Ascending aorta (tissue), 2 donors: ENCODE measurements at regions of chr5 and their contacts with region 1.

Region 1: DNA sequence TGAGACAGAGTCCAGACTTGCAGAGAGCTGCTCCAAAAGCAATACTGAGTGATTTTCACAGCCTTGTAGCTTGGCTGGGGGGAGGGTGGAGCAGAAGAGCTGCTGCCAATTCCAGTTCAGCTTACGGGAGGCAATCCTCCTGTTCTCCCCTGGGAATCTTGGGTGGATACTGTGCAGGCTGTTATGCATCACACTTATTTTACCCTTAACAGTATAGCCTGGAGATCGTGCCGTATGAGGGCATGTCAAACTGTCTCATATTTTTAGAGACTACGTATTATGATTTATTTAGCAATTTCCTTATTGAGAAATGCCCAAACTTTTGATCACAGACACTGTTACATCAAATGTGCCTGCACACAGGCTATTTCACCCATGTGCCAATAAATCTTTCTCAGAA is 85.2 kb downstream of the BASP1 start:
- DNase-seq: peak in 1 of 2 donors; percentile 79
- H3K4me3 ChIP-seq: no peak overlapping the region
- H3K27ac ChIP-seq: peak overlapping the region; percentile 38 to 44
- H3K4me1 ChIP-seq: peaks cover 5 to 37% of the 10 kb centered on the region in 2 donors
- H3K27me3 ChIP-seq: no peaks in the 10 kb centered on the region
- CTCF ChIP-seq: no peak

Region 2: DNA sequence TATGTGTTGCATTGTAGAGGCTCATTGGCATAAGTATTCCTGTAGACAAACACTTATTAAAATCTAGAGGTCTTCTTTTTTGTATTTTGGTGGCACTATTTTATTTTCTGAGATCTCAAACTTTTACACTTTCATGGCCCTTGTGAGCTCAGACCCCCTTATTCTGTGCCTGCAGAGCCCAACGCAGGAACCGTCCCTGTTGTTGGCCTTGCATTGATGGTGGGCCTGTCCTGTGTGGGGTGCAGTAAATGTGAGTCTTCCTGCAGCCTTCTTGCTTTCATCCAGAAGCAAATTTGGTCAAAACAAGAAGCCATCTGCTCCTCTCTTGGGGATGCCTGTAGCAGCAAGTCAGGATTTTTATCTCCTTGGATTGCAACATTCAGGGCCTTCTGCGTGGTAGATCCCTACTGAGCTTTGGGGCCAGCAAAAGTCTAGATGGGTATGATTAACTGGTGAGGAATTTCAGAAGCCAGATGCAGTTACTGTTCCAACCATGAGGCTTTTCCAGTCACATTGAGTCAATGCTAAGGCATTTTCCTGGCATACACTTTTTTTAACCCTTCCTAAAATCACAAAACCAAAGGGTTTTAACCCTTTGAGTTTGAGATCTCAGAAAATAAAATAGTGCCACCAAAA is 53.5 kb before region 1 on chr5:
- intact Hi-C with region 1: loop called (anchors 5 kb)
- DNase-seq: peak in 1 of 2 donors; percentile 75
- H3K4me3 ChIP-seq: no peak overlapping the region
- H3K27ac ChIP-seq: peak overlapping the region in 1 of 2 donors; percentile 9
- H3K4me1 ChIP-seq: peaks cover 0 to 5% of the 10 kb centered on the region in 2 donors
- H3K27me3 ChIP-seq: no peaks in the 10 kb centered on the region
- CTCF ChIP-seq: no peak